ENCODE measurements at regions of chr20 and their contacts with region 1.

Region 1: DNA sequence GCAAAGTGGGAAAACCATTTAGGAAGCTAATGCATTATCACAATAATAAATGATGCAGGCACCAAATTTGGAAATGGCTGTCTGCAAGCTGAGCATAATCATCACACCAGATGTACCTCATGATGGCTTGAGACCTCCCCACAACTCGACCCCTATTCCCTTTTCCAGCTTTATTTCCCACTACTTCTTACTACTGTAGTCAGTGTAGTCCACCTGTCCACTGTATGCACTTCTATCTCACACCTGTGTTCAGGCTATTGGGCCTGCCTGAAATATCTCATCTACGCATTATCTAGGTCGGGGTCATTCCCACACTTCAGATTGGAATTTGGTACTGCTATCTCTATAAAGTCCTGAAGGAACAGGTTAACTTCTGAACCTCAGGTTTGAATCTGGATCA is 72.8 kb downstream of the PFDN4 start:
- DNase-seq: no peak
- H3K4me3 Mint-ChIP-seq: no peak overlapping the region
- H3K27ac Mint-ChIP-seq: no peak overlapping the region
- H3K4me1 Mint-ChIP-seq: peaks cover 15% of the 10 kb centered on the region
- H3K27me3 Mint-ChIP-seq: no peaks in the 10 kb centered on the region
- CTCF ChIP-seq: no peak

Region 2: GRCh38 chr20:54140927-54141566 is 139.6 kb before region 1 on chr20:
- CTCF ChIA-PET with region 1: no interaction called
- POLR2A ChIA-PET with region 1: no interaction called
- intact Hi-C with region 1: no loop called
- DNase-seq: peak; percentile 50
- H3K4me3 Mint-ChIP-seq: no peak overlapping the region
- H3K27ac Mint-ChIP-seq: peak overlapping the region; percentile 42
- H3K4me1 Mint-ChIP-seq: peaks cover 9% of the 10 kb centered on the region
- H3K27me3 Mint-ChIP-seq: no peaks in the 10 kb centered on the region
- CTCF ChIP-seq: no peak

Region 3: DNA sequence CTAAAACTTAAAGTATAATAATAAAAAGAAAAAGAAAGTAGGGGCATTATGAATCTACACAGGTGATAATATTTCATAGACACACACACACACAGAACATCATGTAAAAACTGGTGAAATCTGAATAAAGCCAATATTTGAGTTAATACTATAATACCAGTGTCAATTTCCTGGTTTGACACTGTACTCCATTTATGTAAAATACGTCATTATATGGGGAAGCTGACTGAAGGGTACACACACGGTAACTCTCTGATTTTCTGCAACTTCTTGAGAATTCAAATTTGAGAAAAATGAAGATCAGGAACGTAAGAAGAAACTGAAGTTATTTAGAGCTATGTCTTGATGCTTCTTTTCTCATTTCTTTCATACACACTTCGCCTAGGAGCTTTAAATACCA is 36.6 kb before region 1 on chr20:
- CTCF ChIA-PET with region 1: no interaction called
- POLR2A ChIA-PET with region 1: no interaction called
- intact Hi-C with region 1: no loop called
- DNase-seq: no peak
- H3K4me3 Mint-ChIP-seq: no peak overlapping the region
- H3K27ac Mint-ChIP-seq: no peak overlapping the region
- H3K4me1 Mint-ChIP-seq: no peaks in the 10 kb centered on the region
- H3K27me3 Mint-ChIP-seq: peaks cover 13% of the 10 kb centered on the region
- CTCF ChIP-seq: no peak

Region 4: GRCh38 chr20:54292200-54292599 is 11.5 kb after region 1 on chr20:
- CTCF ChIA-PET with region 1: interaction called, 10 read pairs
- POLR2A ChIA-PET with region 1: interaction called, 7 read pairs
- intact Hi-C with region 1: no loop called
- DNase-seq: peak; percentile 63
- H3K4me3 Mint-ChIP-seq: no peak overlapping the region
- H3K27ac Mint-ChIP-seq: no peak overlapping the region
- H3K4me1 Mint-ChIP-seq: peaks cover 7% of the 10 kb centered on the region
- H3K27me3 Mint-ChIP-seq: no peaks in the 10 kb centered on the region
- CTCF ChIP-seq: no peak